Ovary (tissue), 10 donors: ENCODE measurements at regions of chr1 and their contacts with region 1.

Region 1: GRCh38 chr1:81314513-81315233 is 486.1 kb upstream of the ADGRL2 start:
- DNase-seq: no peak
- H3K4me3 ChIP-seq: no peak overlapping the region
- H3K27ac ChIP-seq: no peak overlapping the region
- H3K4me1 ChIP-seq: peaks cover 3% of the 10 kb centered on the region
- H3K27me3 ChIP-seq: no peaks in the 10 kb centered on the region
- CTCF ChIP-seq: no peak
- EP300 ChIP-seq: no peak
- POLR2A ChIP-seq: no peak

Region 2: GRCh38 chr1:81220614-81221071 is 94.0 kb before region 1 on chr1:
- intact Hi-C with region 1: no loop called
- DNase-seq: peak in 2 of 5 donors; percentile 7 to 18
- H3K4me3 ChIP-seq: no peak overlapping the region
- H3K27ac ChIP-seq: no peak overlapping the region
- H3K4me1 ChIP-seq: peaks cover 2% of the 10 kb centered on the region
- H3K27me3 ChIP-seq: no peaks in the 10 kb centered on the region
- CTCF ChIP-seq: no peak
- EP300 ChIP-seq: no peak
- POLR2A ChIP-seq: no peak

Region 3: DNA sequence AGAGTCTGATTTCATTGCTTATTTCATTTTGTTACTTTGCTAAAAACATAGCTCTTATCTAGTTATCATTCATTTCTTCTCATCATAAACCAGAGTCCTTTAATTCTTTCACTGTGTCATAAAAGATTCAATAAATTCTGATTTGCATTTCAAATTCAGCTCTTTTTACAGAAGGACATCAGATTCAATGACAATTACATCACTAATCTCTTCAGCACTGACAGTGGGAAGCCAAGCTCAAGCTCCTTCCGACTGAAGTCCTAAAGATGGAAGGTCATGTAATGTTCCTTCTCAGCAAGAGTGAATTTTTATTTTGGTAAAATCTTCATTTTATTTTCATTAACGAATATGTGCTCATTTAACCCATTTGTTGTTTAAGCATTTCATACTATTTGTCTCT is 44.6 kb before region 1 on chr1:
- intact Hi-C with region 1: no loop called
- DNase-seq: no peak
- H3K4me3 ChIP-seq: no peak overlapping the region
- H3K27ac ChIP-seq: no peak overlapping the region
- H3K4me1 ChIP-seq: no peaks in the 10 kb centered on the region
- H3K27me3 ChIP-seq: no peaks in the 10 kb centered on the region
- CTCF ChIP-seq: no peak
- EP300 ChIP-seq: no peak
- POLR2A ChIP-seq: no peak

Region 4: DNA sequence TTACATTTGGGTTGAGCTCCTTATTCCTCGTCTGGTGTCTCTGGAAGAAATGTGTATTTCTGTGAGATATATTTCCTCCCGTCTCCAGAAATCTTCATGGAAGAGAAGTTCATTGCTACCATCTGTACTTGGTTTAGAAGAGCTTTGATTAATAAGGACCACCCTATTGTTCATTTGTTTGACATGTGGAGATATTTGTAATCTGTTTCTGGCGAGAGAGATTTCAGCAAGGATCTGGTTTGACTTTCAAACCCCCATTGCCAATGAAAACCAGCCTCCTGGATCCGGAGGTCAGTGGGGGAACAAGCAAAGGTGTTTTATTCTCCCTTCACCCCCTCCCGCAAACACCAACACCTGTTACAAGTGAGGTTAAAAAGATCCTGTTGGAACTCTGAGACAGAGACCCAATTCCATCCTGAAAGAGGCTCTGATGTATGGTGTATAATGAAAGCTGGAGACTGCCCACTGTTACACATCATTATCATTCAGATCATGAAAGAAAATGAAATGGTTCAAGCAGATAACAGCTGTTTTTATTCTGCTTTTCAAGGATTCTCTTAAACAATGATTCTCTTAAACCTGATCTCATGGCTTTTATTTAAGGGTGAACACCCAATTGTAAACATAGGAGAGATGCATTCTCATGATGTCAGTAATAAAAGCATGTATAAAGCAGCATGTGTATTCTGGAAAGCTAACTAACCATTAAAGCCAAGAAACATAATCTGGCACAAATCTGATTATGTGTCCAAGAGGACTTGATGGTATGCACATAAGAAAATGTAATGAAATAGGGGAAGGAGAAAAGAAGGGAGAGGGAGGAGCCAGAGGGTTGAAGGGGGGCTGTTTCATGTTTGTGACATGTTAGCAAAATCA is 92.6 kb after region 1 on chr1:
- intact Hi-C with region 1: loop called in 1 of 4 experiments (anchors 10 kb)
- DNase-seq: no peak
- H3K4me3 ChIP-seq: no peak overlapping the region
- H3K27ac ChIP-seq: no peak overlapping the region
- H3K4me1 ChIP-seq: no peaks in the 10 kb centered on the region
- H3K27me3 ChIP-seq: no peaks in the 10 kb centered on the region
- CTCF ChIP-seq: no peak
- EP300 ChIP-seq: no peak
- POLR2A ChIP-seq: no peak

Region 5: DNA sequence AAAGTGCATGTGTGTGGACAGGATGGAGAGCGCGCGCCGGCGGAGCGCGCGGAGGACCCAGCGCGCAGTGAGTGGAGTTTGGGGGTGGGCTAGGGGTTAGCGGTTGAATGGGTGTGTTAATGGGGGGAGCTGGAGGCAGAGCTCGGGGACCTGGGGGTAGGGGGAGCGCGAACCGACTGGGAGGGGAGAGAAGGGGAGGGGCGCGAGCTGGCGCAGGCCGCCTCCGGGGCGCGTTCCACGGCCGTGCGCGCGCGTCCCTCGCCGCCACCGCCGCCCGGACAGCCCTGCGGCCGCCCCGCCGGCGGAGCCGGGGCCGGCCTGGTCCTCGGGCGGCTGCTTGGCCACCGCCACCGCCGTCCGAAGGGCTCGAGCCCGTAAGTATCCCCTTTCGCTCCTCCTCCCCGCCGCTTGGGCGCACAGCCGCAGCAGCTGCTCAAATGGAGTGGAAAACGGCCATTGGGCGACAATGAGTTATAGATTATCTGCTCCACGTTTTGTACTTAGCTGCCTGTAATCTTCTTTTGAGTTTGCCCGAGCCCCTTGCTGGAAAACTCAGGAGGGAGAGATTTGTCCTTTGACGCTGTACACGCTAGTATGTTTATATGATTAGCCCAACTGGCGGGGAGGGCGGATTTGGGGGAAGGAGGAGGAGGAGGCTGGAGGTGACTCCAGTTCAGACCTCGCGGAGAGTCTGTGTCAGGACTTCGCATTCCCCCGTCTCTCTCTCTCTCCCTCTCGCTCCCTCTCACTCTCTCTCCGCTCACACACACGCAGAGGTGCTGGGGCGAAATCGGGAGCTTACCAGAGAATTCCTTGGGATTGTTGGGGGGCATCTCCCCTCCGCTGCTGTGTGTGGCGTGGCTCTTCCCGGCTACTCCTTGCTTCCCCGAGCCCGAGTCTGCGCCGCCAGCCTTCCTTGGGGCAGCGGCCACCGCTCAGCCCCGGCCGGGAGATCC is 486.3 kb after region 1 on chr1 and contains the start of gene ADGRL2:
- intact Hi-C with region 1: loop called in 1 of 4 experiments (anchors 5 kb)
- DNase-seq: peak; percentile 83 to 89 (median 86)
- H3K4me3 ChIP-seq: peak within 1 kb of the TSS; percentile 49
- H3K27ac ChIP-seq: peak within 1 kb of the TSS; percentile 92 to 96
- H3K4me1 ChIP-seq: no peaks in the 10 kb centered on the region
- H3K27me3 ChIP-seq: no peaks in the 10 kb centered on the region
- CTCF ChIP-seq: no peak
- EP300 ChIP-seq: no peak
- POLR2A ChIP-seq: peak; percentile 71
- total RNA-seq, gene ADGRL2: 59.4 to 83.5 (median 69.0) TPM